ENCODE measurements at regions of chr3 and their contacts with region 1.

Region 1: GRCh38 chr3:9731206-9732079 is at the start of gene BRPF1:
- DNase-seq: peak; percentile 100
- ATAC-seq: peak; percentile 97
- H3K4me3 Mint-ChIP-seq: peak within 1 kb of the TSS; percentile 84
- H3K27ac Mint-ChIP-seq: peak within 1 kb of the TSS; percentile 97
- H3K4me1 Mint-ChIP-seq: peaks cover 60% of the 10 kb centered on the region
- H3K27me3 Mint-ChIP-seq: no peaks in the 10 kb centered on the region
- total RNA-seq, gene BRPF1: 48.1 to 50.1 TPM

Region 2: GRCh38 chr3:9669720-9670432 is 61.6 kb before region 1 on chr3:
- CTCF ChIA-PET with region 1: interaction called, 11 read pairs
- DNase-seq: no peak
- ATAC-seq: no peak
- H3K4me3 Mint-ChIP-seq: no peak overlapping the region
- H3K27ac Mint-ChIP-seq: no peak overlapping the region
- H3K4me1 Mint-ChIP-seq: no peaks in the 10 kb centered on the region
- H3K27me3 Mint-ChIP-seq: no peaks in the 10 kb centered on the region

Region 3: GRCh38 chr3:9716801-9717555 is 14.5 kb before region 1 on chr3:
- CTCF ChIA-PET with region 1: interaction called, 10 read pairs
- DNase-seq: no peak
- ATAC-seq: no peak
- H3K4me3 Mint-ChIP-seq: no peak overlapping the region
- H3K27ac Mint-ChIP-seq: no peak overlapping the region
- H3K4me1 Mint-ChIP-seq: no peaks in the 10 kb centered on the region
- H3K27me3 Mint-ChIP-seq: no peaks in the 10 kb centered on the region

Measured in activated CD8-positive, alpha-beta memory T cell treated with anti-CD3 and anti-CD28 coated beads, Interleukin-2, amount 10 ng/mL, durations not matched to agents 7 days and 5 days (primary cell).